ENCODE measurements at regions of chr4 and their contacts with region 1.

Region 1: GRCh38 chr4:173288296-173288695 is 45.9 kb downstream of the HMGB2 start:
- DNase-seq: peak; percentile 17
- H3K4me3 ChIP-seq: no peak overlapping the region
- CTCF ChIP-seq: peak; percentile 48

Region 2: GRCh38 chr4:173159791-173160190 is 128.5 kb before region 1 on chr4:
- CTCF ChIA-PET with region 1: no interaction called
- POLR2A ChIA-PET with region 1: no interaction called
- DNase-seq: no peak
- H3K4me3 ChIP-seq: no peak overlapping the region
- CTCF ChIP-seq: no peak

Region 3: GRCh38 chr4:173413036-173413435 is 124.7 kb after region 1 on chr4:
- CTCF ChIA-PET with region 1: interaction called, 14 read pairs
- POLR2A ChIA-PET with region 1: no interaction called
- DNase-seq: no peak
- H3K4me3 ChIP-seq: no peak overlapping the region
- CTCF ChIP-seq: no peak

Region 4: DNA sequence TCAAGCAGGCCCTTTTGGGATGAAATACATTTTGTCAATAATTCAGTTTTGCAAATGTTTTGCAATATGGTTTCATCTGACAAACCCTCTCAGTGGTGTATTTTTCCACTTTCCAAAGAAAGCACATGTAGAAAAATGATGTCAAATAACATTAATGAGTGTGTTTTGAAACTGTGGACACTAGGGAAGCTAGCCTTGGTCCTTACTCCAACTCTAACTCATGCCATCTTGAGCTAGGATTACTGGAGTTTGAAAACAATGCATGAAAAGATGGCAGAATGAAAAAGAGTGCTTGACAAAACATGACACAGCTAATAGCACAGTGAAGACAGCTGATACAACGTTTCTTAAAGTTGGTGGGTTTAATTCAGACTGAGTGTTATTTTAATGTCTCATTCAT is 200.4 kb after region 1 on chr4:
- CTCF ChIA-PET with region 1: no interaction called
- POLR2A ChIA-PET with region 1: no interaction called
- DNase-seq: no peak
- H3K4me3 ChIP-seq: no peak overlapping the region
- CTCF ChIP-seq: no peak